ENCODE measurements at regions of chr10 and their contacts with region 1.

Region 1: GRCh38 chr10:18906636-18907035 is 142.0 kb upstream of the MALRD1 start:
- DNase-seq: no peak
- H3K4me3 ChIP-seq: no peak overlapping the region
- H3K27ac ChIP-seq: no peak overlapping the region
- H3K4me1 ChIP-seq: no peaks in the 10 kb centered on the region
- CTCF ChIP-seq: no peak

Region 2: GRCh38 chr10:18918532-18918931 is 11.9 kb after region 1 on chr10:
- CTCF ChIA-PET with region 1: no interaction called
- POLR2A ChIA-PET with region 1: interaction called, 4 read pairs
- intact Hi-C with region 1: loop called (anchors 1 kb)
- DNase-seq: no peak
- H3K4me3 ChIP-seq: no peak overlapping the region
- H3K27ac ChIP-seq: no peak overlapping the region
- H3K4me1 ChIP-seq: no peaks in the 10 kb centered on the region
- CTCF ChIP-seq: no peak